Activated B cell treated with CpG ODN at 0.5 μM for 24 hours (primary cell): ENCODE measurements at regions of chr9 and their contacts with region 1.

Region 1: GRCh38 chr9:93453047-93453914 is at the start of gene FAM120AOS:
- DNase-seq: peak; percentile 68
- ATAC-seq: peak; percentile 74
- H3K4me3 Mint-ChIP-seq: peak within 1 kb of the TSS; percentile 96
- H3K27ac Mint-ChIP-seq: peak within 1 kb of the TSS; percentile 97
- H3K4me1 Mint-ChIP-seq: peaks cover 56% of the 10 kb centered on the region
- H3K27me3 Mint-ChIP-seq: no peaks in the 10 kb centered on the region
- CTCF ChIP-seq: no peak
- total RNA-seq, gene FAM120AOS: 35.8 and 39.0 TPM in 2 replicates

Region 2: DNA sequence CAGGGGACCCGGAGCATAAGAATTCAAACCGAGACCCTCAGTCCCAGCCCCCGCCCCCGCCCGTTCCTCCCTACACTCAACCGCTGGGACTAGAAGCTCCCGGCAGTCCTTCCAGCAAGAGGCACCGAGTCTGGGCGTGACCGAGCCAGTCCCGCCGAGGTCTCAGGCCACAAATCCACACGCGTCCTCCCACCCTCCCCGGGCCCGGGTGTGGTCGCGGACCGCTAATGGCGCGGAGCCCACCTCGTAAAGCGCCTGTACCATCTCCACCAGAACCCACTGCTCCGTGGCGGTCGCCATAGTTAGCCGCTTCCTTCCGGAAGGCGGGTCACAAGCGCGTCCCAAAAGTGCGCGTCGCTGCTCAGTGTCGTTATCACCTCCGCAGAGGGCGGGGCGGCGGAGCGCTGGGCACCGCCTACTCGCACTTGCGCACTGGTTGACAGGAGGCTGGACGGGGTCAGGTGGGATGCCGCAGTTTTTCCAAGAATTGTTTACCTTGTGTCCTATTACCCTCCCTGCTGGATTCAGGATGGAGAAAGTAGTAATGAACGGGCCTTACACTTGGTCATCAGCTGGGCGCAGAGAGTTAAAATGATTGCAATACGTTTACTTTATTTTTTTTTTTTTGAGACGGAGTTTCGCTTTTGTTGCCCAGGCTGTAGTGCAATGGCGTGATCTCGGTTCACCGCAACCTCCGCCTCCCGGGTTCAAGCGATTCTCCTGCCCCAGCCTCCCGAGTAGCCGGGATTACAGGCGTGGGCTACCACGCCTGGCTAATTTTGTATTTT is 1338.0 kb before region 1 on chr9 and contains the start of gene SPTLC1:
- CTCF ChIA-PET with region 1: no interaction called
- POLR2A ChIA-PET with region 1: no interaction called
- intact Hi-C with region 1: loop called (anchors 2 kb)
- DNase-seq: peak; percentile 93
- ATAC-seq: peak; percentile 98
- H3K4me3 Mint-ChIP-seq: peak within 1 kb of the TSS; percentile 100
- H3K27ac Mint-ChIP-seq: peak within 1 kb of the TSS; percentile 99
- H3K4me1 Mint-ChIP-seq: peaks cover 24% of the 10 kb centered on the region
- H3K27me3 Mint-ChIP-seq: no peaks in the 10 kb centered on the region
- CTCF ChIP-seq: no peak
- total RNA-seq, gene SPTLC1: 40.8 and 41.0 TPM in 2 replicates

Region 3: GRCh38 chr9:93095205-93096130 is 357.8 kb before region 1 on chr9:
- CTCF ChIA-PET with region 1: no interaction called
- POLR2A ChIA-PET with region 1: interaction called, 3 read pairs
- intact Hi-C with region 1: loop called (anchors 10 kb)
- DNase-seq: peak; percentile 100
- ATAC-seq: peak; percentile 79
- H3K4me3 Mint-ChIP-seq: peak overlapping the region; percentile 86
- H3K27ac Mint-ChIP-seq: peak overlapping the region; percentile 99
- H3K4me1 Mint-ChIP-seq: peaks cover 83% of the 10 kb centered on the region
- H3K27me3 Mint-ChIP-seq: no peaks in the 10 kb centered on the region
- CTCF ChIP-seq: no peak

Region 4: DNA sequence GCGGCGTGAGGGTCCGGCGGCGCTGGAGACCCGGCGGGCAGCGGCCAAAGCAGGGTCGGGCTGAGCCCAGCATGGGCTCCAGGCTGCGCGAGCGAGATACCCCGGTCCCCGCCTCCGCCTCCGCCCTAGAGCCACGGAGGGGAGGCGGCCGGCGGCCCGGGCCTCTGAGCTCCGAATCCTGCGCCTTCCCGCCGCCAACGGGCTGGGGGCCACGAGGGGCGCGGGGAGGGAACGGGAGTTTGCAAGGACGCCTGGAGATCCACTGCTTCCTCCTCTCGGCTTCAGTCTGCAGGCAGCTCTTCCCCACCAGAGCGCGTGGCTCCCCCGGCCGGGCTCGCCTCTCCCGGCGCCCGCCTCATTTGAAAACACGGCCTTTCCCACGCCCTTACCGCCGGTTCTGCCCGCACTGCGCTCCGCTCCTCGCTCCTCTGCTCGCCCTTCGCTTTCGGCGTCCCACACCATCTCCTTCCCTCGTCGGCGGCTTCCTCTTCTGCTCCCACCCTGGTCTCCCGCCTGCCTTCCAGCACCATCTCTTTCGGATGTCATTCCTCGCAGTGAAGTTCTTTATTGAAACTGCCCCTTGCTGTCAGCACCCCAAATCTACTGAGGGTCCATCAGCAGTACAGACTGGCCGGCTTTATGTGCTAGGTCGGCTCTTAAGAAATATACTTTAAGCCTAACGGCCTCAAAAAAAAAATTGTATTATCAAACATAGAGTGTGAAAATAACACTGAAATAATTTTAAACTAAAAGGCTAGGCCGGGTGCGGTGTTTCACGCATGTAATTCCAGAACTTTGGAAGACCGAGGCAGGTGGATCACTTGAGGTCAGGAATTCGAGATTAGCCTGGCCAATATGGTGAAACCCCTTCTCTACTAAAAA is 106.8 kb before region 1 on chr9:
- CTCF ChIA-PET with region 1: no interaction called
- POLR2A ChIA-PET with region 1: no interaction called
- intact Hi-C with region 1: no loop called
- DNase-seq: no peak
- ATAC-seq: no peak
- H3K4me3 Mint-ChIP-seq: peak overlapping the region; percentile 13
- H3K27ac Mint-ChIP-seq: no peak overlapping the region
- H3K4me1 Mint-ChIP-seq: peaks cover 7% of the 10 kb centered on the region
- H3K27me3 Mint-ChIP-seq: peaks cover 46% of the 10 kb centered on the region
- CTCF ChIP-seq: no peak

Region 5: GRCh38 chr9:93436655-93437442 is 16.4 kb before region 1 on chr9:
- CTCF ChIA-PET with region 1: no interaction called
- POLR2A ChIA-PET with region 1: no interaction called
- intact Hi-C with region 1: no loop called
- DNase-seq: no peak
- ATAC-seq: no peak
- H3K4me3 Mint-ChIP-seq: no peak overlapping the region
- H3K27ac Mint-ChIP-seq: no peak overlapping the region
- H3K4me1 Mint-ChIP-seq: peaks cover 6% of the 10 kb centered on the region
- H3K27me3 Mint-ChIP-seq: no peaks in the 10 kb centered on the region
- CTCF ChIP-seq: no peak

Region 6: DNA sequence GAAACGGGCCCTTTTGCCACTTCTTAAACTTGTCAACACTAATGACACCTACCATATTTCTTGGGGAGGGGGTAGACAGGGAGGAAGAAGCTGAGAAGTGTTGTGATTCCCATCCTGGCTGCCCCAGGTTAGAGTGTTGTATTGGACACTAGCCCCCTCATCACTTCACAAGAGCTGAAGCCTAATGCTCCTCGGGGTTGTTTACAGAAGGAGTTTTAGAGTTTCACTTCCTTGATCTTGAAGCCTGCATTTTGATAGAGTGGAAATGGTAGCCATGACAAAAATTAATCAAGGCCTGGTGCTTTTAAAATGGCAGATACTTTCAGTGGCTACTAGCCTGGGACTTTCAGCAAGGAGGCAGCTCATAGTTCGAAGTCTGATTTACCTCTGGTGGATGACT is 11.1 kb after region 1 on chr9:
- CTCF ChIA-PET with region 1: interaction called, 7 read pairs
- POLR2A ChIA-PET with region 1: interaction called, 47 read pairs
- intact Hi-C with region 1: loop called (anchors 1 kb)
- DNase-seq: no peak
- ATAC-seq: peak; percentile 84
- H3K4me3 Mint-ChIP-seq: peak overlapping the region; percentile 61
- H3K27ac Mint-ChIP-seq: peak overlapping the region; percentile 89
- H3K4me1 Mint-ChIP-seq: peaks cover 87% of the 10 kb centered on the region
- H3K27me3 Mint-ChIP-seq: no peaks in the 10 kb centered on the region
- CTCF ChIP-seq: no peak

Region 7: DNA sequence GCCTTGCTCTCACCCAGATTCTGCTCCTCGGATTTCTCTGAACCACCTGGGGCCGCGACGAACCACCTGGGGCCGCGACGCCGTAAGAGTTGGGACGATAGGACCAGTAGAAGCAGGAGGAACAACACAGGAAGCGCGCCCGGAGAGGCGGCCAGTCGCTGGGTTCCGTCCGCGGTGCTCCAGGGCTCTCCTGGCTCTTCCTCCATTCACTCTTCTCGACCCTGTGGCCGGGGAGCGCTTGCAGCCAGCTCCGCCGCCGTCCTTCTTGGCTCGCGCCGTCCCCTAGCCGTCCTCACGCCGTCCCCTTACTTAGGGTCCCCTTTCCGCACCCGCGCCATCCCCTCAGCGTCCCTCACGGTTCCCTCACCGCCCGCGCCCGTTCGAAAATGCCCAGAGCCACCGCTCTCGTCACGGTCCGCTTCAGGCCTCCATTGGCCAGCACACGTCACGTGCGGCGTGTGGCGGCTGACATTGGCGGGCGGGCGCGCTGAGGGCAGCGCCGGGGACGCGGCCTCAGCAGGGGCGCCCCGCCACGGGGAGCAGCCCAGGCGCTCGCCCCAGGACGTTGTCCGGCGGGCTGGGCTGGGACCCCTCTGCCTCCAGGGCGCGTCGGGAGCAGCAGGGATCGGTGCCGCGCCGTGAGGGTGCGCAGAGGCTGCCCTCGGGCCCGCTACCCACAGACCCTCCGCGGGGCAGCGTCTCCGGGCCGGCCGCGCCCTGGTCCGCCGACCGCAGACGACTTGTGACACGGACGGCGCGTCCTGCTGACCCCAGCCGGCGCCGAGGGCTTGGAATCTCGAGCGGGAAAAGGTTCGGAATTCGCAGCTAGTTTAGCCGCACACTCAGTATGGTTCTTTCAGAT is 577.3 kb after region 1 on chr9:
- CTCF ChIA-PET with region 1: no interaction called
- POLR2A ChIA-PET with region 1: no interaction called
- intact Hi-C with region 1: loop called (anchors 2 kb)
- DNase-seq: peak; percentile 74
- ATAC-seq: peak; percentile 98
- H3K4me3 Mint-ChIP-seq: peak overlapping the region; percentile 91
- H3K27ac Mint-ChIP-seq: peak overlapping the region; percentile 91
- H3K4me1 Mint-ChIP-seq: peaks cover 19% of the 10 kb centered on the region
- H3K27me3 Mint-ChIP-seq: no peaks in the 10 kb centered on the region
- CTCF ChIP-seq: no peak